Heart left ventricle (tissue), 16 donors: ENCODE measurements at regions of chr1 and their contacts with region 1.

Region 1: DNA sequence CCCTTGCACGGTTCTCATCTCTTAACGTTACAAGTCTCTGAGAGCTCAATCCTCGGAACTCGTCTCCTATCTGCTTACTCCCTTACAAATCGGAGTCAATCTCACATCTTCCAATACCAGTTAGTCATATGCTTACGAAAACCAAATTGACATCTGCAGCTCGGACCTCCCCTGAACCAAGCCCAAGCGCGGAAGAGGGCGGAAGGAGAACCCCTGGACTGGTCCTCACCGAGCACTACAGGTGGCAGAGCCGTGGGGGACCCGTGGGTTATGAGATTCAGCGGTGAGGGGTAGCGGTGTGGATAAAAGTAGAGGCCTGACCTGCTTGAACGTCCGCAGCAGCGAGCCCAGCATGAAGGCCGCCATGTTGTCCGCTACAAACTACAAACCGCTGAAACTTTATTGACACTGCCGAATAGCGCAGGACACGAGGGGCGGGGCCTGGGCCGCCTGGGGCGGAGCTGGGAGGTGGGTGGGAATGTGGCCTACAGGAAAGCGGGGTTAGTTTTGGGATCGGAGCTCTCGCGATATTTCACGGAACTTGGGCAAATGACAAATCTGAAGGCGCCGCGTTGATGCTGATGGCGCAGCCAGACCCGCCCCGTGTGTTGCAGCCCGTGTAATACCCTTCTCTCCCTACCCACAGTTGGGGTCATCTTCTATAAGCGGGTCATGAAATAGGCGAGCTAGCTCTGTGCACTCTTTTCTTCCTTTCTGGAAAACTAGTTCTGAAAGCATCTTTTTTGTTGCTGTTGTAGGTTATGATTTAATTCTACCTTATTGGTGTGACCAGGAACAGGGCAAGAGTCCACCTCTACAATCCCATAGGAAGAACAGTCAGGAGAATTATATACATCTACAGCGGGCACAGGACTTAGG is at the start of gene MRPS14:
- DNase-seq: peak; percentile 97 to 98 (median 98)
- ATAC-seq: peak; percentile 97 to 100 (median 99)
- H3K4me3 ChIP-seq: peak within 1 kb of the TSS; percentile 70 to 96 (median 92)
- H3K27ac ChIP-seq: peak within 1 kb of the TSS; percentile 54 to 90 (median 81)
- H3K4me1 ChIP-seq: peaks cover 0 to 27% (median 16%) of the 10 kb centered on the region in 12 donors
- H3K27me3 ChIP-seq: no peaks in the 10 kb centered on the region
- CTCF ChIP-seq: no peak
- POLR2A ChIP-seq: peak in 1 of 2 donors; percentile 70
- total RNA-seq, gene MRPS14: 15.5 to 27.0 (median 22.7) TPM

Region 2: DNA sequence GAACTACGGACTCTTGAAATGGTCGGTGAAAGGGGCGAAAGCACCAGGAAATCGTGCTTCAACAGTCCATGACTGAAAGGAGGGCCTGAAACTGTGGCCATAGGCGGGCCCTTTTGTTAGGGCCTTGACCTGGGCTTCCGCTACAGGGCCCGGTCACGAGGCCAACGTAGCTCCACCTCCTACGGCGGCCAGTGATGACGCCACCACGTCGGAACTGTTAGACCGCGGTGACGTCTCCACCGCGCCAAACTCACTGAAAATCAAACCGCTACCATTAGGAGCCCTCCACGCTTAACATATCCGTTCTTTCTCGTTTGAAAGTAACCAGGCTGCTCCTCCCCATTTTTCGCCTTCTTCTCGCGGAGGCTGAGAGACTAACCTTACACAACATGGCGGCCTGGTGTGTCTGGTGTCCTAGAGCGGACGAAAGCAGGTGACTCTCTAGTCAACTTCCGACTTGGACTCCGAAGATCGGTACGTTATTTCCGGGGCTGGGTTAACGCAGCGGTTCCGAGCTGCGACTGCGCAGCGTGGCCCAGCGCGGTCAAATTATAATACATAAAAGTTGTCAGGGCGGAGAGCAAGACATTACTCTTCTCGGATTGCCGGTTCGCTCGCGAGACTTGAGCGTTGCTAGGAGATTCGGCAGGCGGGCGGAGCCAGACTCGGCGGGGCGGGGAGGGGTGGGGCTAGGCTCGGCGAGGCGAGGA is 23.9 kb before region 1 on chr1:
- intact Hi-C with region 1: loop called in 1 of 10 experiments (anchors 1 kb)
- DNase-seq: peak; percentile 97 to 99 (median 98)
- ATAC-seq: peak; percentile 92 to 96 (median 94)
- H3K4me3 ChIP-seq: peak overlapping the region; percentile 52 to 94 (median 78)
- H3K27ac ChIP-seq: peak overlapping the region; percentile 93 to 99 (median 97)
- H3K4me1 ChIP-seq: peaks cover 0 to 50% (median 14%) of the 10 kb centered on the region in 12 donors
- H3K27me3 ChIP-seq: no peaks in the 10 kb centered on the region
- CTCF ChIP-seq: no peak
- POLR2A ChIP-seq: peak; percentile 17 to 88

Region 3: DNA sequence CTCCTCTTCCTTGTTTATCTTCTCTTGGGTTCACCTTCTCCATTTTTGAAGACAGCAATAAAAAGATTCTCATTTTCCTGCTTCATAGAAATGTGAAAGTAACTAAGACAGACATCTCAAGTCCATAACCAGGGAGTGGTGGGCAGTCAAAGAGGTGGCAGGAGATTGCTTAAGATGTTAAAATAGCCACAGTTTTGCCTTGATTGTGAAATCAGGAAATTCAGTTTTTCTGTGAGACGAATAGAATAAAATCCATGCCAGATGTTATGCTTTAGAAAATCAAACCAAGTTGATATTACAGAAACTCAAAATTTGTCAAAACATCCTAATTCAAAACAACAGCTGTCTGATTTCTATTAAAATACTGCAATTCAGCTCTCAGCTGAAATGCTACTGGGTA is 101.6 kb after region 1 on chr1:
- intact Hi-C with region 1: loop called in 1 of 10 experiments (anchors 2 kb)
- DNase-seq: no peak
- ATAC-seq: no peak
- H3K4me3 ChIP-seq: no peak overlapping the region
- H3K27ac ChIP-seq: peak overlapping the region in 10 of 12 donors; percentile 17 to 65 (median 44)
- H3K4me1 ChIP-seq: peaks cover 0 to 35% (median 20%) of the 10 kb centered on the region in 12 donors
- H3K27me3 ChIP-seq: no peaks in the 10 kb centered on the region
- CTCF ChIP-seq: no peak
- POLR2A ChIP-seq: no peak

Region 4: DNA sequence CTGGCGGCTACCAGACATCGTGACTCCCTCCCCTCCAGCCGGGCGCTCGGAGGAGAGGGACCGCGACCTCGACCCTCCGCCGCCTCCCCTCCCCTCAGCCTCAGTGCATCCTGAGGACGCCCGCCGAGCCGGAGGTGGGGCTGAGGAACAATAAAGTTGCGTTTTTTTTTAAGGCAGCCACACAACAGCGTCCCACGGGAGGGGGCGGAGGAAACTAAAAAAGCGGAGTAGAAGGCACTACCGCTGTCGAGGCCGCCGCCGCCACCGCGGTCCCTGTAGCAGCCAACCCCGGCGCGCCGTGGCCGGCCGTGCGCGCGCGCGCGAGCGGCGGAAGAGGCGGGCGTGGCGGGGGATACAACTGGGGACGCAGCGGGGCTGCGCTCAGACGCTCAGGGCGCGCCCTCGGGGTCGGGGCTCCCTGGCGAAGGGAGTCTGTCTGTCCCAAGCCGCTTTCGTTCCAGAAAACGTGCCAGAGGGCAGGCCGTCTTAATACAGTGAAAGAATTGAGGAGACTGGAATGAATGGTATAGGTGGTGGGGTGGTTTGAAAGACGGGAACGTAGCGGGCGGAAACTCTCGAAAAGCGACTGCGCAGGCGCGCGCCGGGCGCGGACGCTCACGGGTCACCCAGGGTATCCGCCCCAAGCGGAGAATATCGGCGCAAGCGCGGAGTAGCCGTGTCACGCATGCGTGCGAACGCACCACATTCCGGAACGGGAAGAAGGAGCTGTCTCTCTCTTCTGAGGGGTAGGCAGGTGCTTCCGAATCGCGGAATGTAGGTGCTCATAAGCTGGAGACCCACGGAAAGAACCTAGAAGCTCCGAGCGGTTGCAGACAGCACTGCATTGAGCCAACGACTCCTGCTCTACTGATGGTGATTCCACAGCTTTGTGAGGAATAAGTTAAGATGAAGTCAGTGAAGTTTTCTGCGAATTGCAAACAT is 1184.0 kb after region 1 on chr1 and contains the start of gene COP1:
- intact Hi-C with region 1: loop called in 1 of 10 experiments (anchors 10 kb)
- DNase-seq: peak; percentile 96 to 99 (median 97)
- ATAC-seq: peak; percentile 97
- H3K4me3 ChIP-seq: peak within 1 kb of the TSS; percentile 68 to 99 (median 90)
- H3K27ac ChIP-seq: peak within 1 kb of the TSS; percentile 91 to 99 (median 97)
- H3K4me1 ChIP-seq: peaks cover 5 to 53% (median 28%) of the 10 kb centered on the region in 12 donors
- H3K27me3 ChIP-seq: no peaks in the 10 kb centered on the region
- CTCF ChIP-seq: peak in 6 of 12 donors; percentile 2 to 35 (median 25)
- POLR2A ChIP-seq: peak in 1 of 2 donors; percentile 82
- total RNA-seq, gene COP1: 19.9 to 27.0 (median 22.6) TPM